Gastrocnemius medialis (tissue), 4 donors: ENCODE measurements at regions of chr10 and their contacts with region 1.

Region 1: DNA sequence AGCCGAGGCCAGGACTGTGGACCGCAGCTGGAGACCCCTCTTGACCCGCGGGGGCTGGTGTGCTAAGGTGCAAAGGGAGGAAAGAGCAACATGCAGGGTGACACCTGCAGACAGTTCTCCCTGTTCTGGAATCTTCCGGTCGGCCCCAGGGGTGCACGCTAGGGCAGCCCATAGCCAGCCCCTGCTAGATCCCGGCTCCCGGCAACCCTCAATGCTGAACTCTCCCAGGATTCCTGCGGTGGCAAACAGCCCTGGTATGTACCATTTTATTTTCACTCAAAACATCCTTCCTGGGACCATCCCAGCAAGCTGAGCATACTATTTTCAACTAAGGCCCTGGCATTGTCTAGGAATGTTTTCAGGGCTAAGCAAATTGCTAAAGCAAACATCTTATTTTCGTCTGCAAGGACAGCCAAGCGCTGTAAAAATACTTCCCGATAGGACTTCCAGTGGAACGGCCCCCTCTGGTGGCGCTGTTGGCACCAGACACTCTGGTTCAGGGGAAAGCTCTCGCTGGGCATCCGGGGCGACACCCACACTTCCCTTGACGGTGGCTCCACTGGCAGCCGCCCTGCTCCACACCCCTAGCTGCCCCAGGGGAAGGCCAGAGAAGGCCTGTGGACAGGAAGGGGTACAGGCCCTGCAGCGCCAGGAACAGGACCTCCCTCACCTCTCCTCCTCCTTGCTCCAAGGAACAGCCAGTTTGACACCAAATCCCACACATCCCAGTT is 99.4 kb downstream of the CTBP2 start:
- DNase-seq: peak; percentile 79 to 85
- ATAC-seq: peak; percentile 51 to 74
- H3K4me3 ChIP-seq: peak overlapping the region; percentile 10 to 32 (median 26)
- H3K27ac ChIP-seq: peak overlapping the region; percentile 91 to 93 (median 91)
- H3K4me1 ChIP-seq: peaks cover 98 to 99% of the 10 kb centered on the region in 2 donors
- H3K27me3 ChIP-seq: no peaks in the 10 kb centered on the region
- CTCF ChIP-seq: peak; percentile 71 to 92 (median 88)
- POLR2A ChIP-seq: no peak

Region 2: GRCh38 chr10:124916585-124917427 is 144.2 kb before region 1 on chr10:
- in situ Hi-C with region 1: loop called in 1 of 4 experiments (anchors 10 kb)
- intact Hi-C with region 1: loop called (anchors 5 kb)
- DNase-seq: peak; percentile 98
- ATAC-seq: peak; percentile 66 to 67
- H3K4me3 ChIP-seq: peak overlapping the region; percentile 76 to 90 (median 80)
- H3K27ac ChIP-seq: peak overlapping the region; percentile 96 to 99 (median 98)
- H3K4me1 ChIP-seq: peaks cover 46 to 55% of the 10 kb centered on the region in 2 donors
- H3K27me3 ChIP-seq: no peaks in the 10 kb centered on the region
- CTCF ChIP-seq: peak in 1 of 5 experiments; percentile 8
- POLR2A ChIP-seq: peak; percentile 99

Region 3: DNA sequence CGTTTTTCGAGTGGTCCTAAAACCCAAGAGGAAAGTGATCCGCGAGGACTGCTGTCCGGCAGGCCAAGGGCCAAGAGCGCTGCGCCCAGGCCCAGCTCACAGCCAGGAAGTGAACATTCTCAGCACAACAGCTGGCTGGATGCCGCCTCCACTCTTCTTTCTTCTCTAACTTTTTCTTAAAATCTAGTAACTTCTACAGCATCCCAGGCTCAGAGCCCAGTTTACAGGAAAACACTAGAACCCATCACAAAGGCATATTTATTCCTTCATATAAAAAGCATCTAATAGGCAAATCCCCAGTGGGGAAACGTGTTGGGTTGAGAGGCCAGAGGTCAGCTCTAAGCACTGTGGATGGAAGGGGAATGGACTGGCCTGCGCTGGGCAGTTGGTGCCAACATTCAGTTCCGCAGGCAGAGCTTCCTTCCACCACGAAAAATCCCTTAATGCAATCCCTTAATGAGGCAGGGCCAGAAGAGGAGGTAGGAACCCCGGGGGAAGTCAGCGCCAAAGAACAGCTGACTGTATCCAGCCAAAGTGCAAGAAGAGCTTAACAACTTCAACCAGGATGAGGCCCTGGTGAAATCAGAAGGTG is 44.3 kb before region 1 on chr10:
- in situ Hi-C with region 1: no loop called
- intact Hi-C with region 1: loop called (anchors 5 kb)
- DNase-seq: peak; percentile 72 to 87
- ATAC-seq: peak; percentile 62 to 69
- H3K4me3 ChIP-seq: peak overlapping the region; percentile 13 to 33 (median 19)
- H3K27ac ChIP-seq: peak overlapping the region; percentile 90 to 93 (median 91)
- H3K4me1 ChIP-seq: peaks cover 95 to 100% of the 10 kb centered on the region in 2 donors
- H3K27me3 ChIP-seq: no peaks in the 10 kb centered on the region
- CTCF ChIP-seq: no peak
- POLR2A ChIP-seq: peak in 1 of 2 donors; percentile 32

Region 4: DNA sequence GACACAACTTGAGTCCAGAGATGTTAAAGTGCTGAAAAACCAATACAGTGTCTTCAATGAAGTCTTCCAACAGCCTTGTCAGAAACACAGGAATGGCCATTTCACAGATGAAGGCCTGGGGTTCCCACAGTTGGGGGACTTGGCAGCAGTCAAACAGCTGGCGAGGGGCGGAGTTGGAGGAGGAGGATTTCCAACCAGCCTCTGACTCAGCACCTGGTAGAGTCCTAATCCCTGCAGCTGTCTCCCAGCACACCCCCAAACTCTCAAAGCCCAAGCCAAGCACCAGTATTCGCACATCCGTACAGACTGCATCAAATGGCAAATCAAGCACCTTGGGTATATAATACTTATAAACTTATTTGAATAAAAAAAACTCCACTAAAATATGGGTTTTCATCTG is 71.4 kb after region 1 on chr10:
- in situ Hi-C with region 1: no loop called
- intact Hi-C with region 1: no loop called
- DNase-seq: peak in 1 of 2 donors; percentile 34
- ATAC-seq: no peak
- H3K4me3 ChIP-seq: no peak overlapping the region
- H3K27ac ChIP-seq: peak overlapping the region; percentile 91 to 97 (median 97)
- H3K4me1 ChIP-seq: peaks cover 84 to 90% of the 10 kb centered on the region in 2 donors
- H3K27me3 ChIP-seq: no peaks in the 10 kb centered on the region
- CTCF ChIP-seq: no peak
- POLR2A ChIP-seq: no peak

Region 5: DNA sequence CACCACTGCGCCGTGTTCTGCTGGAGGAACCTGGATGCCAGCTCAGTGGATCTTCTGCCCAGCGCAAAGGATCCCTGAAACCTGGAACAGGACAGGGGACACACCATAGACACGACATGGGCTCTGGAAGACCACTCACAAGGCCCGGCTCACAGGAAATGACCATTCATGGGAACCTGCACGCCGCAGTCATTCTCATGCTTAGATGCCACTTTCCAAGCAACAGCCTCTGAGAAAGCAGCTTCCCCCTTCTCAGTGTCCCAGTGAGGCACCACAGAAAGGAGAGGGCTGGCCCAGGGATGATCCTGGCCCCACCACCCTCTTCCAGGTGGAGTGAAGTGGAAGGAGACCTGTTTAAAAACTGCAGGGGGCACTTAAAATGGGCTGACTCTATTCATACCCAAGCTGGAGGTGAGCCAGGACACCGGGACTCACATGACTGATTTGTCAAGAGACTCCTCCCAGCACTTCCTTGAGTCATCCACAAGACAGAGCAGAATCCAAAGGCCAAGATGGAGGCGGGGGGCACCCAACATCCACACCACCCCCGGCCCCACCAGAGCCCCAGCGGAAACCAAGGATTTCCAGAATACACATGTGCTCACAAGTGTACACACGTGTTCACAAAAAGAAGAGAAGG is 88.2 kb after region 1 on chr10:
- in situ Hi-C with region 1: loop called in 2 of 4 experiments (anchors 10 kb)
- intact Hi-C with region 1: loop called (anchors 2 kb)
- DNase-seq: peak; percentile 77 to 92
- ATAC-seq: peak; percentile 75 to 77
- H3K4me3 ChIP-seq: no peak overlapping the region
- H3K27ac ChIP-seq: peak overlapping the region; percentile 88 to 99 (median 97)
- H3K4me1 ChIP-seq: peaks cover 81 to 91% of the 10 kb centered on the region in 2 donors
- H3K27me3 ChIP-seq: no peaks in the 10 kb centered on the region
- CTCF ChIP-seq: no peak
- POLR2A ChIP-seq: peak in 1 of 2 donors; percentile 24

Region 6: DNA sequence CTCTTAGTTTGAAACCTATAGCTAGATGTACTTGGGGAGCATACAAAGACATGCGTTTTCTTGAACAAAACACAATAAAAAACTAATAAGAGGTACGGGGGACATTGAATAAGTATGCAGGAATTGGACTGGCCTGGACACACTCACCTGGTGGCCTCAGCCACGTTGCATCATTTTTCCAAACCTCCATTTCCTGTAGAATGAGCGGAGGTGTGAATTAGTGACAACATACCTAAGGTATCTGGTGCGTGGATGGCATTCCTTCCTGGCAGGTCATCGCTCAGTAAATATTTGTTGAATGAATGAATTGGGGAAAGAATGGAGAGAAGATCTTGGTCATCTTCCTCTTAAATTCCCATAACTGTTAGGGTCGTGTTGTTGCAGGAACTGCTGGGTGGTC is 202.6 kb after region 1 on chr10:
- in situ Hi-C with region 1: no loop called
- intact Hi-C with region 1: no loop called
- DNase-seq: no peak
- ATAC-seq: no peak
- H3K4me3 ChIP-seq: no peak overlapping the region
- H3K27ac ChIP-seq: no peak overlapping the region
- H3K4me1 ChIP-seq: no peaks in the 10 kb centered on the region
- H3K27me3 ChIP-seq: no peaks in the 10 kb centered on the region
- CTCF ChIP-seq: no peak
- POLR2A ChIP-seq: no peak